Activated CD4-positive, alpha-beta memory T cell treated with anti-CD3 and anti-CD28 coated beads, Interleukin-2, amount 10 ng/mL, durations not matched to agents 7 days and 5 days (primary cell): ENCODE measurements at regions of chr22 and their contacts with region 1.

Region 1: DNA sequence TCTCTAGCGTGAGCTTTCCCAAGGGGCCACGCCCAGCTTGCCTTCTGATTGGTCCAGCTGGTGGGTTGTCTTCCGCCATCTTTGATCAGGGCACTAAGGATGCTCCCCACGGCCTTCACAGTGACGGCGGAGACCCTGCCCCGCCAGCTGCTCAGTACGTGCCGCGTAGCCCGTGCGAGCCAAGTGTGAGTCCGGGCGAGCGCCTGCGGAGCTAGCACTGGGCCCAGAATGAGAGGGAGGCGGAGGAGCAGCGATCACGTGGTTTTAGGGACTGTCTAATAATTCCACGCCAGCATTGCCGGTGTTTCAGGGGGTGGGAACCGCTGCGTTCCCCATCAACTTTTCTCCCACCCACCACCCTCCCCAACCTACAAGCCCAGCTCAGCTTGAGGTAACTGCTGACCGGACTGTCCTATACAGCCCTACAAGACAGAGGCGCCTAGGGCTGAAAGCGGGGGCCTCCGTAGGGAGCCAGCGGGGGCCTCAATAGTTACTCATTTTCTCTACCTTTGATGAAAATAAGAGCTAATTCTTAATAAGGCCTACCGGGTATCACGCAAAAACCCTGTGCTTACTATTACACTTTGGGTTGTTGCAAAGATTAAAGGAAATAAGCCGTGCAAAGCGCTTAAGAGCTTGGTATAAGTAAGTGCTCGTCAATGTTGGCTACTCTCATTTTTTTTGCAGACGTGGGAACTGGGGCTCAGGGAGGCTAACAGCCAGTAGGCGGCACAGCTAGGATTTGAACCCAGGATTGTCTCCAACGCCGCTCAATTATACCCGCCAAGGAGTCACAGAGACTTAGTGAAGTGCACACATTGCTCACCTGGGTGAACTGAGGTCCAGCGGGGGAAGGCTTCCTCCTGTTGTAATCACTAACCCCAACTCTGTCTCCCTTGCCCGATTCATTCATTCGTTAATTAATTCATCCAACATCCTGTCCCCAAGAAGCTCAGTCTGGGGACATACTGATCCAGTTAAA is 1.3 kb upstream of the MTFP1 start:
- DNase-seq: peak; percentile 99
- H3K4me3 Mint-ChIP-seq: peak overlapping the region; percentile 94
- H3K27ac Mint-ChIP-seq: peak overlapping the region; percentile 94
- H3K4me1 Mint-ChIP-seq: peaks cover 55% of the 10 kb centered on the region
- H3K27me3 Mint-ChIP-seq: no peaks in the 10 kb centered on the region

Region 2: GRCh38 chr22:30340911-30341685 is 83.2 kb before region 1 on chr22:
- CTCF ChIA-PET with region 1: no interaction called
- POLR2A ChIA-PET with region 1: no interaction called
- DNase-seq: no peak
- H3K4me3 Mint-ChIP-seq: no peak overlapping the region
- H3K27ac Mint-ChIP-seq: no peak overlapping the region
- H3K4me1 Mint-ChIP-seq: peaks cover 24% of the 10 kb centered on the region
- H3K27me3 Mint-ChIP-seq: no peaks in the 10 kb centered on the region

Region 3: GRCh38 chr22:30386960-30387827 is 37.1 kb before region 1 on chr22 and contains the start of gene RNF215:
- CTCF ChIA-PET with region 1: interaction called, 100 read pairs
- POLR2A ChIA-PET with region 1: interaction called, 115 read pairs
- DNase-seq: peak; percentile 82
- H3K4me3 Mint-ChIP-seq: peak within 1 kb of the TSS; percentile 77
- H3K27ac Mint-ChIP-seq: peak within 1 kb of the TSS; percentile 52
- H3K4me1 Mint-ChIP-seq: peaks cover 36% of the 10 kb centered on the region
- H3K27me3 Mint-ChIP-seq: peaks cover 2% of the 10 kb centered on the region
- total RNA-seq, gene RNF215: 12.2 to 13.3 TPM

Region 4: GRCh38 chr22:30396871-30397655 is 27.2 kb before region 1 on chr22 and contains the start of gene SEC14L2:
- CTCF ChIA-PET with region 1: interaction called, 100 read pairs
- POLR2A ChIA-PET with region 1: interaction called, 115 read pairs
- DNase-seq: peak; percentile 62
- H3K4me3 Mint-ChIP-seq: peak within 1 kb of the TSS; percentile 80
- H3K27ac Mint-ChIP-seq: peak within 1 kb of the TSS; percentile 35
- H3K4me1 Mint-ChIP-seq: peaks cover 38% of the 10 kb centered on the region
- H3K27me3 Mint-ChIP-seq: peaks cover 4% of the 10 kb centered on the region
- total RNA-seq, gene SEC14L2: 5.6 to 7.4 TPM

Region 5: DNA sequence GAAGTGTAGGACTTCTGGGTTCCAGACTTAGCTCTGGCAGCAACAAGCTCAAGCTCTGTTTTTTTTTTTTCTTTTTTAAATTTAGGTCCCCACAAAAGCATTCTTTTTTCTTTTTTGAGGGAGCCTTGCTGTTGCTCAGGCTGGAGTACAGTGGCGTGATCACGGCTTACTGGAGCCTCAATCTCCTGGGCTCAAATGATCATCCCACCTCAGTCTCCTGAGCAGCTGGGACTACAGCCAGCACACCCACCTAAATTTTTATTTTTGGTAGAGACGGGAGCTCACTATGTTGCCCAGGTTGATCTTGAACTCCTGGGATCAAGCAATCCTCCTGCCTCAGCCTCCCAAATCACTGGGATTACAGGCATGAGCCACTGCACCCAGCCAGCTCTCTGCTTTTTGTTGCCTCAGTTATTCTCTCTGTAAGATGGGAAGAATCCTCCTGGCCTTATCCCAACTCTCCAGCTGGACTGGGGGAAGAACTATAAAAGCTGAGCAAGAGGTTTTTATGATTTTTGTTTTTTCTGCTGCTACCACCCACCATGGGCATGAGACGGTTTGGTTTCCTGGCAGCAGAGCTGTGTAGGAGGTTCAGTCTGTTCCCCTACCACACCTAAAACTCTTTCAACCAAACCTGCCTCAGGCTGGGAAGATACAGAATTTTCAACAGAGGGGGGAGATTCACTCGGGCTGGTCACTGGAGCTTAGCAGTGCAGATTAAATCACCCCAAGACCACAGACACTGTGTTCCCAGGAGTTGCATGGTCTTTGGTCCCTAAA is 10.3 kb before region 1 on chr22:
- CTCF ChIA-PET with region 1: interaction called, 9 read pairs
- POLR2A ChIA-PET with region 1: interaction called, 53 read pairs
- DNase-seq: no peak
- H3K4me3 Mint-ChIP-seq: no peak overlapping the region
- H3K27ac Mint-ChIP-seq: no peak overlapping the region
- H3K4me1 Mint-ChIP-seq: peaks cover 14% of the 10 kb centered on the region
- H3K27me3 Mint-ChIP-seq: no peaks in the 10 kb centered on the region

Region 6: GRCh38 chr22:30435674-30436126 is 11.4 kb after region 1 on chr22:
- CTCF ChIA-PET with region 1: interaction called, 69 read pairs
- POLR2A ChIA-PET with region 1: interaction called, 80 read pairs
- DNase-seq: peak; percentile 82
- H3K4me3 Mint-ChIP-seq: peak overlapping the region; percentile 56
- H3K27ac Mint-ChIP-seq: peak overlapping the region; percentile 88
- H3K4me1 Mint-ChIP-seq: peaks cover 24% of the 10 kb centered on the region
- H3K27me3 Mint-ChIP-seq: peaks cover 19% of the 10 kb centered on the region

Region 7: GRCh38 chr22:30444632-30445437 is 20.6 kb after region 1 on chr22:
- CTCF ChIA-PET with region 1: interaction called, 10 read pairs
- POLR2A ChIA-PET with region 1: interaction called, 4 read pairs
- DNase-seq: peak; percentile 69
- H3K4me3 Mint-ChIP-seq: no peak overlapping the region
- H3K27ac Mint-ChIP-seq: no peak overlapping the region
- H3K4me1 Mint-ChIP-seq: peaks cover 34% of the 10 kb centered on the region
- H3K27me3 Mint-ChIP-seq: peaks cover 31% of the 10 kb centered on the region

Region 8: DNA sequence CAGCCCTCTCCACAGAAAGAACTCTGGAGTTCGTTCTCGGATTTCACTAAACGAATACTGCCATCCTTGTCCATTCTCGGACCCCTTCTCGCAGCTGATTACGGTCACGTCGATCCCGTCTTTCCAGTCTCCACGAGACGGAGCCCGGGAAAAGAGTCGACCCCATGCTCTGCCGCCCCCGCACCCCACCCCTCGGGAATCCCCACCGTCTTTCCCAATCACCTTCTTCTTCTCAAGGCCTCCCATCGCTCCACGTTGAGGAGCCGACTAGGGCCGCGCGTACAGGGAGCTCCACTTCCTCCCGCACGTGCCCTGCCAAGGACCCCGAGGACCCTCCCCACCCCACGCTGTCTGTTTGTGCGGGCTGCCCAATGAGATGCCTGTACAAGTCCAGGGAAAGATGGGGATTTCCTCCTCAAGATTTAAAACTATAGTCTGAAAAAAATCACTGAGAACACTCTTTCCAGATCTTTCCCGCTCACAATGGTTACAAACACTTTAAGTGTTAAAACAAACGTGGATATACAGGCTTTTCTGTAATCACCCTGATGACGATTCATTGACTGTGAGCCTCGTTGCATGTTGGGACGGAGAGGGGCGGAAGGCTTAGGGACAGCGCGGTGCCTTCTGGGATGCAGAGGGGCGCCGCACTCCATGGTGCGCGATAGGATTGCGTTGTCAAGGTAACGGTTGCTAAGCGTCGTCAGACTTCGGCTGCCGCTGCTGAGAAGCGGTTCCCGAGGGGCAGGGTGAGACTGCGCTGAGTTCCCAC is 167.5 kb after region 1 on chr22 and contains the start of gene PES1:
- CTCF ChIA-PET with region 1: interaction called, 3 read pairs
- POLR2A ChIA-PET with region 1: interaction called, 16 read pairs
- DNase-seq: peak; percentile 95
- H3K4me3 Mint-ChIP-seq: no peak within 1 kb of the TSS
- H3K27ac Mint-ChIP-seq: no peak within 1 kb of the TSS
- H3K4me1 Mint-ChIP-seq: peaks cover 1% of the 10 kb centered on the region
- H3K27me3 Mint-ChIP-seq: peaks cover 10% of the 10 kb centered on the region
- total RNA-seq, gene PES1: 48.3 to 54.9 TPM